ENCODE measurements at regions of chr12 and their contacts with region 1.

Region 1: DNA sequence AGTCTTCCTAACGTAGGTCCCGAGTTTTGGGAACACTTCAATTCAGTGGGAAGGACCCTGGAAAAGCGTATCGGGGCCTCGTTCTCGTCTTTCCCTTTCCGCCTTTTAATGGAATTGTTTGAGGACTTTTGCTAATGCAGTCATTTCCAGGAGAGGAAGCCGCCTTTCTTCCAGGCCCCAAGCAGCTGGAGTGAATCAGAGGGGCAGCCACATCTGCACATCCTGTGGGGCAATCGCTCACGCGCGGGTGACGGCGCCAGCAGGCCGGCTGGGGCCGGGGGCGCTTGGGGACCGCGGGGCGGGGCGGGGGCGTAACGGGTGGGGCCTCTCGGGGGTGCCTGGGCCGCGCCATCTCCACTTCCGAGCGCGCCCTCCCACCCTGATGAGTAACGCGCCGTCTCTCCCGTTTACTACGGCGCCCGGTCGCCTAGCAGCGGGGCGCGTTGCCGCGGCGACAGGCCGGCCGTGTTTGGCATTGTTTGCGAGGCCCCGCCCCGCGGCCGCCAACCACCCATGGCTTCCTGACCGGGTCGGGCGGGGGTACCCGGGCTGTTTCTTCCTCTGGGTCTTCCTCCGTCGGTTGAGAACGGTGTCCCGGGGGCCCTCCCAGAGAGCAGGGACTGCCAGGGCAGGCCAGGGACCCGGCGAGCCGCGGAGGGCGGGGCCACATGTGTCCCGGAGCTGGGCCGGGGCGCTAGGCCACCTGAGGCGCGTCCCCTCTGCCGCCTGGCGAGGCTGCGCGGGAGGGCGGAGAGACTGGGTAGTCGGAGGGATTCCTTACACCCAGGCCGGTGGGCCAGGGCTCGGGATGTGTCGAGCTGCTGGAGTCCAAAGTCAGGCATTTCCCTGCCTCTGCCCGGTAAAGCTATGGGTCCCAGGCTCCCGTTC is 2.3 kb downstream of the GSG1 start:
- DNase-seq: peak; percentile 93
- ATAC-seq: peak; percentile 70
- H3K4me3 Mint-ChIP-seq: peak overlapping the region; percentile 63
- H3K27ac Mint-ChIP-seq: peak overlapping the region; percentile 72
- H3K4me1 Mint-ChIP-seq: peaks cover 58% of the 10 kb centered on the region
- H3K27me3 Mint-ChIP-seq: no peaks in the 10 kb centered on the region

Region 2: GRCh38 chr12:12533238-12533829 is 567.8 kb before region 1 on chr12:
- CTCF ChIA-PET with region 1: no interaction called
- POLR2A ChIA-PET with region 1: no interaction called
- intact Hi-C with region 1: no loop called
- DNase-seq: no peak
- ATAC-seq: no peak
- H3K4me3 Mint-ChIP-seq: no peak overlapping the region
- H3K27ac Mint-ChIP-seq: peak overlapping the region; percentile 61
- H3K4me1 Mint-ChIP-seq: peaks cover 47% of the 10 kb centered on the region
- H3K27me3 Mint-ChIP-seq: no peaks in the 10 kb centered on the region

Region 3: DNA sequence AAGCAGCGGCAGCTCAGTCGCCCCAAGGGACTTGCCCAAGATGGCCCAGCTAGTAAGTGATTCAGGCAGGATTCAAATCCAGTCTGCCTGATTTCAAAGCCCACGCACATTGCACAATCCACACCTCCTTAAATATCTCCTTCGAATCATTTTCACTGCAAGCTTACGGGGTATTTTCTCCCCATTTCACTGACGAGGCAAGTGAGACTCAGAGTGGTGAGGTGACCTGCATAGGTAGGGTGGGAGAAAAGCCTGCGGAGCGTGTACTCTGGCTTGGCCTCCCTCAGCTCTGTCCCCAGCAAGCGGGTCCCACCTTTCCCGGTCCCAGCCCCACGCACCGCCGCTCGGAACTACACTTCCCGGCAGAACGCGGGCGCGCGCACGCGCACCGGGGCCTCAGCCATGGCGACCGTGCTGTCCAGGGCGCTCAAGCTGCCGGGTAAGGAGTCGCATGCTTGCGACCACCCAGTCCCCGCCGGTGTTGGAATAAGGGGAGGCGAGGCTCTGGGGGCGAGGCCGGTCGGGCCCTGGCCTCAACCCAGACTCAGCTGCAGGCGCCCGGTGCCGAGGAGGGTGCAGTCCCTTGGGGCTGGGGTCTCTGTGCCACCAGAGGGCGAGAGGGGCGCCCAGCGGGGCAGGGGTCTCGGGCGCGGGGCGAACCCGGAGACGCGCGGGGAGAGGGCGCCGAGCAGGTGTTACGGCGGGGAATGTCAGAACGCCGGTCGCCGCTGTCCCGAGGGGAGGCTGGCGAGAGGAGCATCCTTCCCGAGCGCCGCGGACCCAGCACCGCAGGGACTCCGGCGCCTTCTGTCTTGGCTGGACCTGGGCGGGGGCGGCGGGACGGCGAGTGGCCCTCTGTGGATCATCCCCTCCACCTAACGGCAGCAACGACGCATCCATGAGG is 56.9 kb before region 1 on chr12 and contains the start of gene FAM234B:
- CTCF ChIA-PET with region 1: interaction called, 6 read pairs
- POLR2A ChIA-PET with region 1: interaction called, 4 read pairs
- intact Hi-C with region 1: loop called in 1 of 2 experiments (anchors 2 kb)
- DNase-seq: peak; percentile 85
- ATAC-seq: peak; percentile 88
- H3K4me3 Mint-ChIP-seq: peak within 1 kb of the TSS; percentile 83
- H3K27ac Mint-ChIP-seq: peak within 1 kb of the TSS; percentile 77
- H3K4me1 Mint-ChIP-seq: peaks cover 27% of the 10 kb centered on the region
- H3K27me3 Mint-ChIP-seq: peaks cover 5% of the 10 kb centered on the region
- total RNA-seq, gene FAM234B: 11.1 to 12.2 TPM

Region 4: GRCh38 chr12:13148064-13148847 is 47.1 kb after region 1 on chr12:
- CTCF ChIA-PET with region 1: no interaction called
- POLR2A ChIA-PET with region 1: no interaction called
- intact Hi-C with region 1: no loop called
- DNase-seq: no peak
- ATAC-seq: no peak
- H3K4me3 Mint-ChIP-seq: no peak overlapping the region
- H3K27ac Mint-ChIP-seq: no peak overlapping the region
- H3K4me1 Mint-ChIP-seq: peaks cover 19% of the 10 kb centered on the region
- H3K27me3 Mint-ChIP-seq: peaks cover 2% of the 10 kb centered on the region

Region 5: DNA sequence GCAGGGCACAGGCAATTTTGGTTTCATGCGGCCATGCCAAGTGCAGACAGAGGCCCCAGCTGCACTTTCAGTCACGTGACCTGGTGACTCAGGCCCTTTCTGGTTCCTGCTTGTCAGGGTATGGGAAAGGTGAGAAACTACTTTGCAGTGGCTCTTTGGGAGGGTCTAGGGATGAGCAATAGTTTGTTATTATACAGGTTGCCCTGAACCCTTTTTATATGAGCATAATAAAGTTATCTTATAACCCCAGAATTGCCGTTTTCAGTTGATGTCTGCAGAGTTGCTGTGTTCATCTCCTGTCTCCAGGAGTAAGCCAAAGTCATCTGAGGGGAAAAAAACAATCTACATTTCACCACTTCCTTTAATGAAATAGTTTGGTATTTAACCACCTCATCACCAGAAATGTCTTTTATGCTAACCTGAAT is 64.5 kb after region 1 on chr12:
- CTCF ChIA-PET with region 1: interaction called, 4 read pairs
- POLR2A ChIA-PET with region 1: interaction called, 4 read pairs
- intact Hi-C with region 1: loop called (anchors 1 kb)
- DNase-seq: peak; percentile 92
- ATAC-seq: peak; percentile 97
- H3K4me3 Mint-ChIP-seq: no peak overlapping the region
- H3K27ac Mint-ChIP-seq: peak overlapping the region; percentile 58
- H3K4me1 Mint-ChIP-seq: peaks cover 24% of the 10 kb centered on the region
- H3K27me3 Mint-ChIP-seq: peaks cover 2% of the 10 kb centered on the region

Region 6: GRCh38 chr12:13173012-13173932 is 72.1 kb after region 1 on chr12:
- CTCF ChIA-PET with region 1: interaction called, 3 read pairs
- POLR2A ChIA-PET with region 1: no interaction called
- intact Hi-C with region 1: loop called in 1 of 2 experiments (anchors 2 kb)
- DNase-seq: peak; percentile 76
- ATAC-seq: peak; percentile 98
- H3K4me3 Mint-ChIP-seq: no peak overlapping the region
- H3K27ac Mint-ChIP-seq: no peak overlapping the region
- H3K4me1 Mint-ChIP-seq: peaks cover 25% of the 10 kb centered on the region
- H3K27me3 Mint-ChIP-seq: peaks cover 13% of the 10 kb centered on the region

Region 7: GRCh38 chr12:13347241-13348043 is 246.3 kb after region 1 on chr12:
- CTCF ChIA-PET with region 1: no interaction called
- POLR2A ChIA-PET with region 1: no interaction called
- intact Hi-C with region 1: loop called in 1 of 2 experiments (anchors 1 kb)
- DNase-seq: peak; percentile 82
- ATAC-seq: peak; percentile 92
- H3K4me3 Mint-ChIP-seq: no peak overlapping the region
- H3K27ac Mint-ChIP-seq: peak overlapping the region; percentile 21
- H3K4me1 Mint-ChIP-seq: peaks cover 23% of the 10 kb centered on the region
- H3K27me3 Mint-ChIP-seq: peaks cover 45% of the 10 kb centered on the region

Measured in activated CD4-positive, alpha-beta T cell treated with anti-CD3 and anti-CD28 coated beads for 36 hours (primary cell).